ENCODE measurements at regions of chr5 and their contacts with region 1.

Region 1: GRCh38 chr5:112551419-112552032 is 132.4 kb upstream of the EPB41L4A start:
- DNase-seq: peak in 2 of 10 donors; percentile 33 to 56
- H3K4me3 ChIP-seq: peak overlapping the region in 3 of 59 donors; percentile 8 to 13 (median 9)
- H3K27ac ChIP-seq: peak overlapping the region in 52 of 59 donors; percentile 1 to 88 (median 62)
- H3K27me3 ChIP-seq: no peaks in the 10 kb centered on the region
- CTCF ChIP-seq: peak; percentile 55 to 97 (median 87)

Region 2: DNA sequence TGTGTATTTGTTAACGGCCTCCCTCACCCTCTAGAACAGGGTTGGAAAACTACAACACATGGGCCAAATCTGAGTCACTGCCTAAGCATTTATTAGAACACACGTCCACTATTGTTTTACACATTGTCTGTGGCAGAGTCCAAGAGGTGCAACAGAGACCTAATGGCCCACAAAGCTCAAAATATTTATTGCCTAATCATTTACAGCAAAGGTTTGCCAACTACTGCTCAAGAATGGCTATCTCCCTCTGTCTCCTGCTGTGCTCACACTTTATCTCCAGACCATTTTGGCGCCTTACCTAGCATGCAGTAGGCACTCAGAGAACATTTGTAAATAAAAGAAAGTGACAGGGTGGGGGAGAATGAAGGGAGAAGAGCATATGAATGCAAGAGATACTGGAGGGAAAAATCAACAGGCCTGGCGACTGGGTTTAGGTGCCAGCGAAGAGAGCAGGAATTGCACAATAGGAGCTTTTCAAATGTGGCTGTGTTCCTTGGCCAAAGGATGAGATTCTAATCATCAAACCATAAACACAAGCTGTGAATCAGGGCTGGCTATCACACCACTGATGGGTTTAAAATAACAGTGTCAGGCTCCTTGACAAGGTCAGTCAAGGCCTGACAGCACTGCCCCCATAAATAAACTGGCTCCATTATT is 212.7 kb before region 1 on chr5:
- intact Hi-C with region 1: no loop called
- DNase-seq: no peak
- H3K4me3 ChIP-seq: no peak overlapping the region
- H3K27ac ChIP-seq: peak overlapping the region in 12 of 59 donors; percentile 11 to 59 (median 34)
- H3K27me3 ChIP-seq: no peaks in the 10 kb centered on the region
- CTCF ChIP-seq: no peak

Region 3: DNA sequence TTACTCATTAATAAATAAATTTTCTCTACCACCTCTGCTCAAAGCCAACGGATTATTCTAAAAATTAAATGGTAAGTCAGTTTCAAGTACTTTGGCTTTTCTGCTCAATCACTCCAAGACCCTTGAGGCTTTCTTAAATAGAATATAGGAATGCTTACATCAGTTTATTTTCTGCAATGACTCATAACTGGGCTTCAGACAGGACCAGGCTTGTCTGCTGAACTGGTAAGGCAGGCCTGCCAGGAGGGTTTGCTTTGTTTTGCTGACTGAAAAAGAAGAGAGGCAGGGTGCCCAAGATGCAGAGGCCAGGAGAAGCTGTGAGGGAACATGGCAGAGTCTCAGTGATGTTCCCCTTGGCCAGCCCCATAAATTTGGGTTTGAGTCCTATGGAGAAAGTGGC is 72.1 kb before region 1 on chr5:
- intact Hi-C with region 1: no loop called
- DNase-seq: no peak
- H3K4me3 ChIP-seq: no peak overlapping the region
- H3K27ac ChIP-seq: peak overlapping the region in 4 of 59 donors; percentile 15 to 93 (median 35)
- H3K27me3 ChIP-seq: no peaks in the 10 kb centered on the region
- CTCF ChIP-seq: no peak

Region 4: GRCh38 chr5:112604732-112605630 is 53.5 kb after region 1 on chr5:
- intact Hi-C with region 1: loop called (anchors 2 to 10 kb)
- DNase-seq: peak in 1 of 10 donors; percentile 27
- H3K4me3 ChIP-seq: no peak overlapping the region
- H3K27ac ChIP-seq: no peak overlapping the region
- H3K27me3 ChIP-seq: no peaks in the 10 kb centered on the region
- CTCF ChIP-seq: peak in 48 of 56 donors; percentile 11 to 68 (median 42)

Region 5: DNA sequence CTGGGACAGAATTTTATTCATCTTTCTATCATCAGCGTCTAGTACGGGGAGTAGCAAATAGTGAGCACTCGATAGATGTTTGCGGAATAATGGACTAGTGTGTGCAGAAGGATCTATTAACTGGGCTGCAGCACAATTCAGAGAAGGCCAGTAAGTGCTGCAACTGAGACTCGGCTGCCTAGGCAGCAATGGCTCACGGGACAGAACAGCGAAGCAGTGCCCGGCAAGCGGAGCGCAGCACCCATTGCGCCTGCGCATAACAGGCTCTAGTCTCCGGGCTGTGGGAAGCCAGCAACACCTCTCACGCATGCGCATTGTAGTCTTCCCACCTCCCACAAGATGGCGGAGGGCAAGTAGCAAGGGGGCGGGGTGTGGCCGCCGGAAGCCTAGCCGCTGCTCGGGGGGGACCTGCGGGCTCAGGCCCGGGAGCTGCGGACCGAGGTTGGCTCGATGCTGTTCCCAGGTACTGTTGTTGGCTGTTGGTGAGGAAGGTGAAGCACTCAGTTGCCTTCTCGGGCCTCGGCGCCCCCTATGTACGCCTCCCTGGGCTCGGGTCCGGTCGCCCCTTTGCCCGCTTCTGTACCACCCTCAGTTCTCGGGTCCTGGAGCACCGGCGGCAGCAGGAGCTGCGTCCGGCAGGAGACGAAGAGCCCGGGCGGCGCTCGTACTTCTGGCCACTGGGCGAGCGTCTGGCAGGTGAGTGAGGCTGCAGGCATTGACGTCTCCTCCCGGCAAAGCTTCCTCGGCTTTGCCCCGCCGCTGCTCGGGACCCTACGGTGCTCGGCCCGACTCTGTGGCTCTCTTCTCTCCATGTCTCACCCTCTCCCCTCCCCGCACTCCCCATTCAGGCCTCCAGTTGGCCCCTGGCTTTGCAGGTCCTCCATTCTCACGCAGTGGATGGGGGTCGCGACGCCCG is 155.9 kb after region 1 on chr5:
- intact Hi-C with region 1: loop called in 1 of 2 experiments (anchors 2 kb)
- DNase-seq: peak; percentile 96 to 99 (median 98)
- H3K4me3 ChIP-seq: peak overlapping the region; percentile 68 to 100 (median 94)
- H3K27ac ChIP-seq: peak overlapping the region; percentile 68 to 99 (median 96)
- H3K27me3 ChIP-seq: no peaks in the 10 kb centered on the region
- CTCF ChIP-seq: peak in 39 of 56 donors; percentile 4 to 63 (median 37)

Region 6: GRCh38 chr5:112757468-112758208 is 206.1 kb after region 1 on chr5:
- intact Hi-C with region 1: loop called (anchors 1 to 2 kb)
- DNase-seq: no peak
- H3K4me3 ChIP-seq: peak overlapping the region in 14 of 59 donors; percentile 2 to 44 (median 28)
- H3K27ac ChIP-seq: peak overlapping the region in 54 of 59 donors; percentile 1 to 79 (median 50)
- H3K27me3 ChIP-seq: no peaks in the 10 kb centered on the region
- CTCF ChIP-seq: peak; percentile 70 to 97 (median 88)

Region 7: DNA sequence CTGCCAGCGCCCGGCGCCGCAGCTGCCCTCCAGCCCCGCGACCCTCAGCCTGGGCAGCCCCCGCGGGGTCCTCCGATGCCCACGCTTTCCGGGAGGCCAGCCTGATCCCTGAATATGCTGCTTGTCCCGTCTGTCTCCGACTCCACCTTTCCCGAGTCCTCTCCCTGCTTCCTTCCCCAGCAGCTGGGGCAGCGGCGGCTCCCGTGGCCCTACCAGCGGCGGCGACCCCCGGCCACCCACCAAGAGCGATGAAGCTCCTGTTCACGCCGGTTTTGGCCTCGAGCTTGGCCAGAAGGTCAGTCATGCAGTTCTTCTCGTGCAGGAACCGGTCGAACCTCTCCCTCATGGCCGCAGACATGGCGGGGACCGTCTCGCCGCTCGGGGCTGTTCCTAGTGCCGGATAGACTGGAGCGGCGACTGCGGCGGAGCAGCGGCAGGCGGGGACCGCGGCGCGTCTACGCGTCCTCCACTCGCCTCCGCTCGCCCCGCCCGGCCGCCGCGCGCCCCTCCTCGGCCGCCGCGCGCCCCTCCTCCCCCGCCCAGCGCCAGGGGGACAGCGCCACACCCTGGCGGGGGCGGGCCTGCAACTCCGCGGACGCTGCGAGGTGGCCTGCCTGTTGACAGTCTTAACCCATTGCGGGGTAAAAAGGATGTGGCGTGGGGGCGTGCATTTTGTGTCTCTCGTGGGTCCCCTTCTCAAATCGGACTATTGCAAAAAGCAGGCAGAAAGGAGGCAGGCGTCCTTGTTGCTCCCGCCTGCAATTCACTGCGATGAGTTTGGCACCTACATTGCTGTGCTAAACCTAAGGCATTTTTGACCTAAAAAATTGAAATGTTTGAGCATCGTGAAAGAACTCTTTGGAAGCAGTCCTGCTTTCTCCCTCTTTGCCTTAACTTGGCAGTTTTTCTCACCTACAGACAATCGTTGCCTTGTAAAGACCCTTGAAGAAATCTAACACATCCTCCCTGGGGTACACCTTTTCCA is 370.6 kb after region 1 on chr5 and contains the start of gene REEP5:
- intact Hi-C with region 1: loop called in 1 of 2 experiments (anchors 5 kb)
- DNase-seq: peak; percentile 62 to 89 (median 80)
- H3K4me3 ChIP-seq: peak within 1 kb of the TSS; percentile 41 to 100 (median 94)
- H3K27ac ChIP-seq: peak within 1 kb of the TSS; percentile 83 to 99 (median 96)
- H3K27me3 ChIP-seq: no peaks in the 10 kb centered on the region
- CTCF ChIP-seq: peak; percentile 21 to 95 (median 76)
- total RNA-seq, gene REEP5: 87.5 to 287 (median 217) TPM

Region 8: DNA sequence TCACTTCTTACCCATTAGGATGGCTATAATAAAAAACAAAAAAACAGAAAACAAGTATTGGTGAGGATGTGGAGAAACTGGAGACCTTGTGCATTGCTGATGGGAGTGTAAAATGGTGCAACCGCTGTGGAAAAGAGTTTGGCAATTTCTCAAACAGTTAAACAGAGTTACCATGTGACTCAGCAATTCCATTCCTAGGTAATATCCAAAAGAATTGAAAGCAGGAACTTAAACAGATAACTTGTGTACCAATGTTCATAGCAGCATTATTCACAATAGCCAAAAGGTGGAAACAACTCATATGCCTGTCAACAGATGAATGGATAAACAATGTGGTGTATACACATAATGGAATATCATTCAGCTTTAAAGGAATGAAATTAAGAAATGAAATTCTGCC is 453.9 kb after region 1 on chr5:
- intact Hi-C with region 1: no loop called
- DNase-seq: no peak
- H3K4me3 ChIP-seq: no peak overlapping the region
- H3K27ac ChIP-seq: no peak overlapping the region
- H3K27me3 ChIP-seq: no peaks in the 10 kb centered on the region
- CTCF ChIP-seq: no peak

Region 9: GRCh38 chr5:113043491-113043931 is 492.0 kb after region 1 on chr5:
- intact Hi-C with region 1: no loop called
- DNase-seq: peak in 2 of 10 donors; percentile 23 to 43
- H3K4me3 ChIP-seq: no peak overlapping the region
- H3K27ac ChIP-seq: peak overlapping the region in 4 of 59 donors; percentile 14 to 30 (median 17)
- H3K27me3 ChIP-seq: no peaks in the 10 kb centered on the region
- CTCF ChIP-seq: peak in 32 of 56 donors; percentile 10 to 52 (median 32)